Caco-2 (cell line): ENCODE measurements at regions of chr2 and their contacts with region 1.

Region 1: DNA sequence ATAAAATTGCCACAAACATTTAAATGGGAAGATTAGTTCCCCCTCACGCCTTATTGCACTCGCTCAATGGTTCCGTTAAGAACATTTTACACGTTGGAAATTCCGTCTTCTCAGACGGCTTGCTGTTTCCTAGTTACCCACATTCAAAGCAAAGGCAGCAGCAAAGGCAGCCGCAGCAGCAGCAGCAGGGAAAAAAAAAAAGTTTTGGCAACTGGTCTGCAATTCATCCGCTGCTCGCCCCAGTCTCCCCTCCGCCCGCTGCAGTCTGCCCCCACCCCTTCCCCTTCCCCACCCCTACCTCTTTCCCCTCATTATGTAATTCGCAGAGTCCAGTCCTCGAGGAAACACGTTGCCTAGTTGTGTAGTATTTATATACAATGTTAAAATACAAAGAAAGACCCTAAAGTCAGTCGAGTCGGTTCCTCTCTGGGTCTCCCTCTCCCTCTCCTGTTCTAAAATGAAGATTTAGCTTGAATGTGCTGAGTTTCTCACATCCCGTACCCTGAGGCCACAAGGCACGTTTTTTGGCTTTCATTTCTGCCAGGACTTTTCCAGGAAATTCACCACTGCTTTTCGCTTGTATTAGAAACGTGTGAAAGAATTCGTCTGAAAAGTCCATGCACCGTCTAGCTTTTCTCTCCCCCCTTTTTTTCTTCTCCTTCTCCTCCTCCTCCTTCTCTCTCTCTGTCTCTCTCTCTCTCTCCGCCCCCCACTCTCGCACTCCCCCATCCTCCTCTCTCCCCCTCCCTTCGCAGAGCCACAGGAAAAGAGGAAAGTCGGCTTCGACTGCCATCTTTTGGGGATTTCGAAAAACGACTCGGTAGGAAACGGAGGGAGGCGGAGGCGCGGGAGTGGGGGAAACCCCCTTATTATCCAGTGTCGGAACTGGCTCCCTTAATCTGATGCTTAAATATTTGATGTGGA is 140.0 kb downstream of the MEIS1 start:
- DNase-seq: peak; percentile 65 to 71
- H3K4me3 ChIP-seq: peak overlapping the region; percentile 42
- H3K4me3 Mint-ChIP-seq: peak overlapping the region; percentile 75
- H3K27ac Mint-ChIP-seq: peak overlapping the region; percentile 29
- H3K4me1 ChIP-seq: peaks cover 9% of the 10 kb centered on the region; the same call in 1 of the 2 replicates
- H3K4me1 Mint-ChIP-seq: peaks cover 14% of the 10 kb centered on the region
- H3K27me3 ChIP-seq: peaks cover 1% of the 10 kb centered on the region
- H3K27me3 Mint-ChIP-seq: peaks cover 8% of the 10 kb centered on the region
- CTCF ChIP-seq: peak; percentile 57 to 71

Region 2: GRCh38 chr2:65639156-65639864 is 935.7 kb before region 1 on chr2:
- CTCF ChIA-PET with region 1: no interaction called
- POLR2A ChIA-PET with region 1: no interaction called
- intact Hi-C with region 1: loop called (anchors 5 kb)
- DNase-seq: no peak
- H3K4me3 ChIP-seq: no peak overlapping the region
- H3K4me3 Mint-ChIP-seq: no peak overlapping the region
- H3K27ac Mint-ChIP-seq: no peak overlapping the region
- H3K4me1 ChIP-seq: no peaks in the 10 kb centered on the region
- H3K4me1 Mint-ChIP-seq: no peaks in the 10 kb centered on the region
- H3K27me3 ChIP-seq: no peaks in the 10 kb centered on the region
- H3K27me3 Mint-ChIP-seq: peaks cover 9% of the 10 kb centered on the region
- CTCF ChIP-seq: no peak

Region 3: GRCh38 chr2:65918760-65919187 is 656.2 kb before region 1 on chr2:
- CTCF ChIA-PET with region 1: interaction called, 4 read pairs
- POLR2A ChIA-PET with region 1: no interaction called
- intact Hi-C with region 1: loop called (anchors 10 kb)
- DNase-seq: no peak
- H3K4me3 ChIP-seq: no peak overlapping the region
- H3K4me3 Mint-ChIP-seq: no peak overlapping the region
- H3K27ac Mint-ChIP-seq: no peak overlapping the region
- H3K4me1 ChIP-seq: no peaks in the 10 kb centered on the region
- H3K4me1 Mint-ChIP-seq: no peaks in the 10 kb centered on the region
- H3K27me3 ChIP-seq: no peaks in the 10 kb centered on the region
- H3K27me3 Mint-ChIP-seq: peaks cover 13% of the 10 kb centered on the region
- CTCF ChIP-seq: peak in 1 of 2 experiments; percentile 14

Region 4: DNA sequence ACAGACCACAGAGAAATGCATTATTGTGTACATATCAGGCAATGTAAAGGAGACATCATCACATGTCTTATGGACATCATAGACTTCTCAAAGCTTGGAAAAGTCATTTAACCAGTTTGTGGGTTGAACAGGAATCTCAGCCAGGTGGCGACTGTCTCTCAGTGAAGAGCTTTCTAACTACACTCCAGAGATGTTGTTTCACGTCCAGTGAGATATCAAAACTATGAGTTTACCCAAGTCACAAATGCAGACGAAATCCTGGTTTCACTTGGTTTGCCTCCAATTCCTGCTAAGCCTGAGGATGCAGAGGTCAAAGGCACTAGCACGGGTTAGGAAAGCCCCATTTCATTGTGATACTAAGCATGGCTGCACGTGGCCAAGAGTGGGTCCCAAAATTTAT is 524.6 kb before region 1 on chr2:
- CTCF ChIA-PET with region 1: no interaction called
- POLR2A ChIA-PET with region 1: no interaction called
- intact Hi-C with region 1: loop called (anchors 1 kb)
- DNase-seq: no peak
- H3K4me3 ChIP-seq: no peak overlapping the region
- H3K4me3 Mint-ChIP-seq: no peak overlapping the region
- H3K27ac Mint-ChIP-seq: no peak overlapping the region
- H3K4me1 ChIP-seq: no peaks in the 10 kb centered on the region
- H3K4me1 Mint-ChIP-seq: no peaks in the 10 kb centered on the region
- H3K27me3 ChIP-seq: no peaks in the 10 kb centered on the region
- H3K27me3 Mint-ChIP-seq: peaks cover 7% of the 10 kb centered on the region
- CTCF ChIP-seq: no peak

Region 5: GRCh38 chr2:66429071-66429477 is 145.9 kb before region 1 on chr2:
- CTCF ChIA-PET with region 1: interaction called, 19 read pairs
- POLR2A ChIA-PET with region 1: interaction called, 6 read pairs
- intact Hi-C with region 1: loop called (anchors 1 kb)
- DNase-seq: peak in 1 of 2 experiments; percentile 56
- H3K4me3 ChIP-seq: no peak overlapping the region
- H3K4me3 Mint-ChIP-seq: no peak overlapping the region
- H3K27ac Mint-ChIP-seq: no peak overlapping the region
- H3K4me1 ChIP-seq: peaks cover 25% of the 10 kb centered on the region
- H3K4me1 Mint-ChIP-seq: peaks cover 16% of the 10 kb centered on the region
- H3K27me3 ChIP-seq: no peaks in the 10 kb centered on the region
- H3K27me3 Mint-ChIP-seq: no peaks in the 10 kb centered on the region
- CTCF ChIP-seq: peak; percentile 86 to 92

Region 6: GRCh38 chr2:67650291-67651133 is 1075.5 kb after region 1 on chr2:
- CTCF ChIA-PET with region 1: no interaction called
- POLR2A ChIA-PET with region 1: no interaction called
- intact Hi-C with region 1: loop called (anchors 5 kb)
- DNase-seq: peak; percentile 63 to 64
- H3K4me3 ChIP-seq: no peak overlapping the region
- H3K4me3 Mint-ChIP-seq: no peak overlapping the region
- H3K27ac Mint-ChIP-seq: no peak overlapping the region
- H3K4me1 ChIP-seq: no peaks in the 10 kb centered on the region
- H3K4me1 Mint-ChIP-seq: no peaks in the 10 kb centered on the region
- H3K27me3 ChIP-seq: no peaks in the 10 kb centered on the region
- H3K27me3 Mint-ChIP-seq: peaks cover 4% of the 10 kb centered on the region
- CTCF ChIP-seq: peak; percentile 20 to 47